Thyroid gland (tissue), 4 donors: ENCODE measurements at regions of chr2 and their contacts with region 1.

Region 1: DNA sequence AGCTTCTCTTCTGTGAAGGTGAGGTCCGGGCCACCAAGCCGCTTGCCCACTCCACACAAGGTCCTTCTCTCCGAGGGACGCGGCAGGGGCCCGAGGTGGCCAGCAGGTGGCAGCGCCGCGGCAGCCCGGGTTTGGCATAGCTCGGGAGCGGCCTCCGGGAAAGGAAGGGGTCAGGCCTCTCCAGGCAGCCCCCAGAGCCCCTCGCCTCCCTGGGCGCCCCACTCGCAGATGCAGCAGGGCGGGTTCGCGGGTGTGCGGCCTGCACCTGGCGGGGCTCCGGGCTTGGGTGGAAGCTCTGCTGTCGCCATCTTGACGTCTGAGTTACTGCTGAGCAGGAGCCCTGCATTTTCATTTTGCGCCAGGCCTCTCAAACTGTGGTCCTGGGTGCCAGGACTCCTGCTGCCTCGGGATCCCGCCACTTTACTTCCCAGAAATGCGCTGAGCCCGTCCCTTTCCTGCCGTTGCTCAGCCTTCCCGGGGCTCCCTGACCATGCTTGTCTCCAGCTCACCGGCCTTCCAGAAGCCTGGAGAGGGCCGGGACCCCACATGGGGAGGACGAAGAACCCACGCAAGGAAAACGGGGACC is 18.6 kb upstream of the NCL start:
- DNase-seq: peak; percentile 69 to 74
- H3K4me3 ChIP-seq: peak overlapping the region in 2 of 3 donors; percentile 23 to 35
- H3K27ac ChIP-seq: peak overlapping the region; percentile 64 to 69 (median 64)
- H3K4me1 ChIP-seq: peaks cover 0 to 8% of the 10 kb centered on the region in 2 donors
- H3K27me3 ChIP-seq: no peaks in the 10 kb centered on the region
- CTCF ChIP-seq: peak; percentile 67 to 97 (median 80)
- POLR2A ChIP-seq: no peak

Region 2: GRCh38 chr2:231557571-231558237 is 74.8 kb after region 1 on chr2:
- intact Hi-C with region 1: loop called (anchors 5 kb)
- DNase-seq: peak; percentile 54 to 59
- H3K4me3 ChIP-seq: no peak overlapping the region
- H3K27ac ChIP-seq: no peak overlapping the region
- H3K4me1 ChIP-seq: peaks cover 0 to 4% of the 10 kb centered on the region in 2 donors
- H3K27me3 ChIP-seq: no peaks in the 10 kb centered on the region
- CTCF ChIP-seq: peak in 5 of 6 experiments; percentile 31 to 75 (median 66)
- POLR2A ChIP-seq: no peak